Activated B cell treated with CpG ODN at 0.5 μM for 24 hours (primary cell): ENCODE measurements at regions of chr2 and their contacts with region 1.

Region 1: DNA sequence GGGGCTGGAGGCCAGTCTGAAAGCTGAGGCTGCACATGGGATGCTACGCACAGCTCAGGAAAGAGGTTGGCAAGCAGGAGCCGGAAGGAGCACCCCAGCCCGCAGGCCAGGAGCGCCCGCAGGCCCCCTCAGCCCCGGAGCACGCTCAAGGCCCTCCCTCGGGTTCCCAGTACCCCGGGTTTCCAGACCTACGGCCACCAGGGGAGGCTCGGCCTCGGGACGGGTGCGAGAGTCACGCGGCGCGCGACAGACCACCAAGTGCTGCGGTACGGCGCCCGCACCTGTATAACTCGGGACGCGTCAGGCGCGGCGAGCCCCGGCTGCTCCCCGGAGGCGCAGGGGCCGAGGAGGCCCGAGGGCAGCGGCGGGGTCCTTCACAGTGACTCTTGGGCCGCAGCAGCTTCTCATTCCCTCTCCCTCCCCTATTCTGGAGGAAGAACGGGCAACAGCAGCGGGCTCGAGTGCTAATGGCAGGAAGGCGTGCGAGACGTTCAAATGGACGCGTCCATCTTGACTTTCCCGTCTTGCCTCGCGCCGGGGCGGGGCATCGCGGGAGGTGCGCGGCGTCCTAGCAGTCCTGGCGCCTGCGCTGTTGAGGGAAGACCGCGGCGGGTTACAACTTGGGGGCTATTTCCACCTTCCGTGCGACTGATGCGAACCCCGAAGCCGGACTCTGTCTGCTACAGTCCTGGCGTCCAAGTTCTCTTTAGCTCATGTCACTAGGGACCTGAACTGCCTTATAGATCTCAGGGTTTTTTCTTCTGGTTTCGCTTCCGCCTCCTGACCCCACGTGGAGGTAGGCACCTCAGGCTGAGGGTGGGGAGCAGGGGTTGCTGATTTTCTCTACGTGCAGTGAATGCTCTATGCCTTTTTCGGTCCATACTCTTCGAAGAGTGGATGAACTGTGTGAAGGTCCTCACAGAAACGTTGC is at the start of gene ANAPC1:
- DNase-seq: peak; percentile 79
- ATAC-seq: peak; percentile 91
- H3K4me3 Mint-ChIP-seq: peak within 1 kb of the TSS; percentile 92
- H3K27ac Mint-ChIP-seq: peak within 1 kb of the TSS; percentile 94
- H3K4me1 Mint-ChIP-seq: peaks cover 11% of the 10 kb centered on the region
- H3K27me3 Mint-ChIP-seq: no peaks in the 10 kb centered on the region
- CTCF ChIP-seq: no peak
- total RNA-seq, gene ANAPC1: 74.0 and 88.1 TPM in 2 replicates

Region 2: GRCh38 chr2:111624401-111625156 is 259.3 kb before region 1 on chr2:
- CTCF ChIA-PET with region 1: no interaction called
- POLR2A ChIA-PET with region 1: no interaction called
- intact Hi-C with region 1: no loop called
- DNase-seq: no peak
- ATAC-seq: no peak
- H3K4me3 Mint-ChIP-seq: no peak overlapping the region
- H3K27ac Mint-ChIP-seq: no peak overlapping the region
- H3K4me1 Mint-ChIP-seq: peaks cover 4% of the 10 kb centered on the region
- H3K27me3 Mint-ChIP-seq: no peaks in the 10 kb centered on the region
- CTCF ChIP-seq: no peak

Region 3: DNA sequence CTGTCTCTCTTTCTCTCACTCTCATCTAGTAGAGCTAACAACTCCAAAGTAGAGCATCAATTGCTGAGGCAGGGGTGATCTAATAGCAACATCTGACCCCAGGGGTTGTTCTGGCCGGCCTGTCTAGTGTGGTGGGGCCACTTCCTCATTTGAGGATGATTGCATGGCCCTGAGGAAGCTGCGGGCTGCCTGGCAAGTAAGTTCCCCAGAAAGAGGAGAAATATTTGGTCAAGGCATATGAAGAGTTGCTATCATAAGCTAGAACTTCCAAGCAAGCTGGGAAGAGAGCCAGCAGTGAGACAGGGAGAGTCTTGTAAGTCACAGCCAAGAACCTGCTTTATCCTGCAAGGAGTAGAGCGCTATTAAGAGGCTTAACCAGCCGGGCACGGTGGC is 120.3 kb after region 1 on chr2:
- CTCF ChIA-PET with region 1: no interaction called
- POLR2A ChIA-PET with region 1: interaction called, 12 read pairs
- intact Hi-C with region 1: no loop called
- DNase-seq: no peak
- ATAC-seq: peak; percentile 68
- H3K4me3 Mint-ChIP-seq: no peak overlapping the region
- H3K27ac Mint-ChIP-seq: peak overlapping the region; percentile 19
- H3K4me1 Mint-ChIP-seq: peaks cover 27% of the 10 kb centered on the region
- H3K27me3 Mint-ChIP-seq: no peaks in the 10 kb centered on the region
- CTCF ChIP-seq: no peak

Region 4: GRCh38 chr2:112121682-112122254 is 237.8 kb after region 1 on chr2:
- CTCF ChIA-PET with region 1: interaction called, 11 read pairs
- POLR2A ChIA-PET with region 1: no interaction called
- intact Hi-C with region 1: loop called (anchors 5 kb)
- DNase-seq: no peak
- ATAC-seq: no peak
- H3K4me3 Mint-ChIP-seq: no peak overlapping the region
- H3K27ac Mint-ChIP-seq: no peak overlapping the region
- H3K4me1 Mint-ChIP-seq: peaks cover 1% of the 10 kb centered on the region
- H3K27me3 Mint-ChIP-seq: no peaks in the 10 kb centered on the region
- CTCF ChIP-seq: peak; percentile 47

Region 5: GRCh38 chr2:112481050-112481527 is 597.2 kb after region 1 on chr2:
- CTCF ChIA-PET with region 1: no interaction called
- POLR2A ChIA-PET with region 1: no interaction called
- intact Hi-C with region 1: loop called (anchors 5 kb)
- DNase-seq: peak; percentile 71
- ATAC-seq: peak; percentile 73
- H3K4me3 Mint-ChIP-seq: peak overlapping the region; percentile 98
- H3K27ac Mint-ChIP-seq: peak overlapping the region; percentile 97
- H3K4me1 Mint-ChIP-seq: peaks cover 22% of the 10 kb centered on the region
- H3K27me3 Mint-ChIP-seq: no peaks in the 10 kb centered on the region
- CTCF ChIP-seq: no peak

Region 6: GRCh38 chr2:112584134-112584890 is 700.4 kb after region 1 on chr2 and contains the start of gene CHCHD5:
- CTCF ChIA-PET with region 1: no interaction called
- POLR2A ChIA-PET with region 1: interaction called, 3 read pairs
- intact Hi-C with region 1: loop called (anchors 10 kb)
- DNase-seq: peak; percentile 84
- ATAC-seq: peak; percentile 85
- H3K4me3 Mint-ChIP-seq: peak within 1 kb of the TSS; percentile 96
- H3K27ac Mint-ChIP-seq: peak within 1 kb of the TSS; percentile 96
- H3K4me1 Mint-ChIP-seq: peaks cover 35% of the 10 kb centered on the region
- H3K27me3 Mint-ChIP-seq: no peaks in the 10 kb centered on the region
- CTCF ChIP-seq: no peak
- total RNA-seq, gene CHCHD5: 26.0 and 28.4 TPM in 2 replicates